Gastrocnemius medialis (tissue), 4 donors: ENCODE measurements at regions of chr16 and their contacts with region 1.

Region 1: GRCh38 chr16:11133344-11133943 is 122.6 kb downstream of the SOCS1 start:
- DNase-seq: peak; percentile 85 to 86
- ATAC-seq: peak; percentile 49 to 64
- H3K4me3 ChIP-seq: no peak overlapping the region
- H3K27ac ChIP-seq: peak overlapping the region; percentile 86 to 90 (median 90)
- H3K4me1 ChIP-seq: peaks cover 58 to 71% of the 10 kb centered on the region in 2 donors
- H3K27me3 ChIP-seq: no peaks in the 10 kb centered on the region
- CTCF ChIP-seq: no peak
- POLR2A ChIP-seq: no peak

Region 2: DNA sequence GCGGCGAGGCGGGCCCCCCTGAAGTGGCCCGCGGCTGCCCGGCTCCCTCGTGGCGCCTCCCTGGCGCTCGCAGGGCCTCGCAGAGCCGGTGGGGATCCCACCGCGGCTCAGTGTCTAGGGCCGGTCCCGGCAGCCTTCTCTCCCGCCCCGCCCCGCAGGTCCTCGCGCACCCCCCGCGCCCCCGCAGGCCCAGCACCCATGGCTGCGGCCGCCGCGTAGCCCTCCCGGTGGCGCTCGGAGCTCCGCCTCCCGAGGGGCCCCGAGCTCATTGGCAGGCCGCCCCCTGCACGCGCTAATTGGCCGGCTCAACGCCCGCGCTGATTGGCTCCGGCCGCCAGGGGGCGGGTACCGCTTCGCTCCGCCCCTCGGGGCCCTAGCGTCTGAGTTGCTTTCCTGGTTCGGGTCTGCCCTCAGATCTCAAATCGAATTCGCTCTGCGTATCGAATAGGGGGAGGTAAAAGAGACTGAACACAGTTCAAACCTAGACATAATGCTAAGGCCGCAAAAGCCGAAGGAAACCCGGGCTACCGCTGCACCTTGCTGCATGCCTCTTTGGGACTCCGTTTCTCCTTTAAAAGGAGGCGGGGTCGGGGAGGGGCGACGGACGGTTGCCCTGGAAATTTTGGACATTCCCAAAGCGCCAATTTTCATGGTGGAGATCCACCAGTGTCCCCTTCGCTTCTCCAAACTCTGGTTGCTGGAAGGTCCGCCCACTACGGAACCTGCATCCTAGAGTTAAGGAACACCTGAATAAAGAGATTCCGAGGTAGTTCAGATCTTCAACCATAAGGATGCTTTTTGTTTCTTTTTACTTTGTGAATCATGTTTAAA is 191.0 kb before region 1 on chr16 and contains the start of gene DEXI:
- in situ Hi-C with region 1: no loop called
- intact Hi-C with region 1: no loop called
- DNase-seq: peak; percentile 91 to 93
- ATAC-seq: peak; percentile 27 to 49
- H3K4me3 ChIP-seq: peak within 1 kb of the TSS; percentile 70 to 82 (median 74)
- H3K27ac ChIP-seq: peak within 1 kb of the TSS; percentile 91 to 96 (median 94)
- H3K4me1 ChIP-seq: peaks cover 72 to 77% of the 10 kb centered on the region in 2 donors
- H3K27me3 ChIP-seq: no peaks in the 10 kb centered on the region
- CTCF ChIP-seq: peak in 4 of 5 experiments; percentile 45 to 66 (median 48)
- POLR2A ChIP-seq: peak; percentile 90 to 91
- total RNA-seq, gene DEXI: 83.9 to 184 (median 127) TPM

Region 3: GRCh38 chr16:11010575-11011221 is 122.7 kb before region 1 on chr16:
- in situ Hi-C with region 1: no loop called
- intact Hi-C with region 1: loop called (anchors 1 kb)
- DNase-seq: peak; percentile 85 to 90
- ATAC-seq: peak; percentile 94 to 96
- H3K4me3 ChIP-seq: peak overlapping the region in 1 of 4 donors; percentile 3
- H3K27ac ChIP-seq: peak overlapping the region; percentile 63 to 84 (median 72)
- H3K4me1 ChIP-seq: peaks cover 11 to 25% of the 10 kb centered on the region in 2 donors
- H3K27me3 ChIP-seq: no peaks in the 10 kb centered on the region
- CTCF ChIP-seq: no peak
- POLR2A ChIP-seq: peak in 1 of 2 donors; percentile 11

Region 4: DNA sequence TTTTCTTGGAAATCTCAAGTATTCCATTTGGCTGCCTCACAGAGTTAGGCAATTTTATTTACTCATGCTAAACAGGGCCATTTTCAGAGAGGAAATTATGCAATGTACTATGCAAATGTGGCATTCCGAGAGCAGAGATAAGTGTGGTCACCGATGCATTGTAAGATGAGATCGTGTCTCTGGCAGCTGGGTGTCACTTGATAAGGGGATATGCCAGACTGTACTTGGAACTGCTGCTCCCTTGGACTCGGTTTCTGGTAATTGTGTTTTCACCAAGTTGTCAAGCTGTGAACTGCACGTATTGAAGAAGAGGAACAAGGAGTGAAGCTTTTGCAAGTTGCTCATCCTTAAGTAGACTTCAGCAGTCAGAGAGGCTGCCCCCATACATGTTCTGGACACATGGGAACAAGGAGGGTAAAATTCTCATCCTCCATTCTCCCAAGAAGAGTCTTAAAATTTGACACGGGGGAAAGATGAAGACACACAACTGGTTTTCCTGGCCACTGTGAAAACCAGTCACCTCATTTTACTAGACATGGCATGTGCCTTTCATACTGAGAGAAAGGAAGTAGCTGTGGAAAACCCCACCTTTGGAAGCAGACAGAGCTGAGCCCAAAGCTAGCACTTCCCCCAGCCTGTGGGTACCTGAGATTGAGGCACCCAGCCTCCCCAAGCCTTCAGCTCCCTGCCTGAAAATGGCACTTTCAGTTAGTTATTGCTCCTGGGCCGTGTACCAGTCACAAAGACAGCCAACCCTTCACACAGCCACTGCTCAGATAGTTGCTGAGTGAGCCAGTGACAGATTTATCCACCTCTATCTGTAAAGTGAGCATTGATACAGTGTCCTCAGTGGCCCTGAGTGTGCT is 28.2 kb before region 1 on chr16:
- in situ Hi-C with region 1: no loop called
- intact Hi-C with region 1: loop called (anchors 2 kb)
- DNase-seq: peak; percentile 57 to 84
- ATAC-seq: peak; percentile 89 to 96
- H3K4me3 ChIP-seq: no peak overlapping the region
- H3K27ac ChIP-seq: peak overlapping the region; percentile 12 to 65 (median 48)
- H3K4me1 ChIP-seq: peaks cover 16 to 31% of the 10 kb centered on the region in 2 donors
- H3K27me3 ChIP-seq: no peaks in the 10 kb centered on the region
- CTCF ChIP-seq: peak in 1 of 5 experiments; percentile 13
- POLR2A ChIP-seq: no peak

Region 5: DNA sequence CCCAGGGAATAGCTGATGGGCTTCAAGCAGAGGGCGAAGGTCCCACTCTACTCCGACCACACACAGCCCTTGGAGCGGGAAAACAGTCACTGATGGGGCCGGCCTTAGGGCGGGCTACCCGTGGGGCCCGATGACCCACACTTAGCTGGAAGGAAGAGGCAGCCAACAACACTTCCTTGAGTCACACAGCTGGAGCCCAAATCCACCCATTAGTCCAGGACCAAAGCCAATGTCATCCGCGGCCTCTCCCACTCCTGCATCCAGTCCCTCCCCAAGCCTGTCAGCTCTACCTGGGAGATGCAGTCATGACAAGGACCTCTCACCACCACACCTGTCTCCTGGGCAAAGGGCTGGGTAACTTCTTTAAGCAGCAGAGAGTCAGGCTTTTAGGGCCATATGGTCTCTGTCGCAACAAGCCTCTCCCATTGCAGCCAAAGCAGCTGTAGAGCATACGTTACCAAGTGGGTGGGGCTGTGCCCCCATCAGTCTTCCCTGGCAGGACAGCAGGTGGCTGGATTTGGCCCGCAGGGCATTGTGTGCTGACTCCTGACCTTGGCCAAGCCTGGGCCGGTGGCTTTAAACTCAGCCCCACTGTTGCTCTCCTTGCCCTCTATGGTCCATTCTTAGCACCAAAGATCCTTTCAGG is 11.9 kb after region 1 on chr16:
- in situ Hi-C with region 1: no loop called
- intact Hi-C with region 1: loop called (anchors 1 kb)
- DNase-seq: peak; percentile 73 to 91
- ATAC-seq: peak; percentile 85 to 94
- H3K4me3 ChIP-seq: no peak overlapping the region
- H3K27ac ChIP-seq: peak overlapping the region; percentile 54 to 73 (median 68)
- H3K4me1 ChIP-seq: peaks cover 31 to 40% of the 10 kb centered on the region in 2 donors
- H3K27me3 ChIP-seq: no peaks in the 10 kb centered on the region
- CTCF ChIP-seq: peak in 1 of 5 experiments; percentile 34
- POLR2A ChIP-seq: peak; percentile 50 to 58

Region 6: DNA sequence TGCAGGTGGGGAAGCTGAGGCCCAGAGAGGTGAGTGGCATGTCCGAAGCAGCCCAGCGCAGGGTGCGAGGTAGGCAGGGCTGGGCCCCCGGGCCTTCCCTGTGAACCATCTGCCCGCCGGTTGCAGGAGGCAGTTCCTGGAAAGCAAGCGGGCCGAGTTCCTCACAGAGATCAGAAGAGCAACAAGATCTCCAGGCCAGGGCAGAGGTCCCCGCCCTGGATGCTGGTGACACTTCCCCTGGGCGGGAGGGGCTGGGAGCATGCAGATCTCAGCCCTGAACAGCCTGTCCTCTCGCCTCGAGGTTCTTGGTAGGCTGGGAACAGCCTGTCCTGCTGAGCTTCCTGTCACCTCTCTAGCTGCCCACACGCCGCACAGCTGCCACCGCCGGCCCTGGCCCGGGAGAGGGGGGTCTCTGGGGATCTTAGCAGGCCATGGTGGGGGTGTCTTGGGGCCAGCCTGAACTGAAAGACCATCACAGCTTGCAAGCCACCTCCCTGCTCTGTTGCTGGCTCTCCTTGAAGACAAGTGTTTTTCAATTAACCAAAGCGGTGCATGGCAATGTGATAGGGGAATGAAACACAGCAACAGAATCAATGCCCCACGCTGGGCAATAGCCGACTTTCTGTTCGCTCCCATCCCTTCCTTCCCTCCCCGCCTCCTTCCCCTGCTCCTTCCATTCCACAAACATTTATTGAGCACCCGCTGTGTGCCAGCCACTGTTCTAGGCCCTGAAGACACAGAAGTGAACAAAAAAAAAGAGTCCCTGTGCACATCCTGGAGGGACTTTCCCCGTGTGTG is 90.9 kb after region 1 on chr16:
- in situ Hi-C with region 1: loop called in 1 of 4 experiments (anchors 25 kb)
- intact Hi-C with region 1: loop called (anchors 1 kb)
- DNase-seq: peak; percentile 93
- ATAC-seq: peak; percentile 96 to 98
- H3K4me3 ChIP-seq: no peak overlapping the region
- H3K27ac ChIP-seq: peak overlapping the region; percentile 55 to 82 (median 78)
- H3K4me1 ChIP-seq: peaks cover 15 to 24% of the 10 kb centered on the region in 2 donors
- H3K27me3 ChIP-seq: no peaks in the 10 kb centered on the region
- CTCF ChIP-seq: no peak
- POLR2A ChIP-seq: peak; percentile 34 to 45

Region 7: DNA sequence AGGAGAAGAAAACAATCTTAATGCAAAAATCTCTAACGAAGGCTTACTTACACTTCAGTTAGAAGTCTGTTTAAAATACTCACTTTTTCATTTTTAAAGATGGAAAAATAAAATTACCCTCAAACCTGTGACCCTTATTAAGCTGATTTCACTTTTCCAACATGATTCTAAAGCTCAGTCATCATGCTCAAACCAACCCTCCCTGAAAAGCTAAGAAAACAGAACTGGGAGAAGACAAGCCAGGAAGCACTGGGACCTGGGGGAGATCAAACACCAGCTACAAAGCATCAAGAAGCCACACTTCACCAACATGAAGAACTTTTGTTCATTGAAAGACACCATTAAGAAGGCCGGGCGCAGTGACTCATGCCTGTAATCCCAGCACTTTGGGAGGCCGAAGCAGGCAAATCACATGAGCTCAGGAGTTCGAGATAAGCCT is 364.4 kb after region 1 on chr16:
- in situ Hi-C with region 1: no loop called
- intact Hi-C with region 1: loop called (anchors 5 kb)
- DNase-seq: peak in 1 of 2 donors; percentile 59
- ATAC-seq: no peak
- H3K4me3 ChIP-seq: no peak overlapping the region
- H3K27ac ChIP-seq: peak overlapping the region; percentile 84 to 96 (median 92)
- H3K4me1 ChIP-seq: peaks cover 33 to 34% of the 10 kb centered on the region in 2 donors
- H3K27me3 ChIP-seq: no peaks in the 10 kb centered on the region
- CTCF ChIP-seq: no peak
- POLR2A ChIP-seq: no peak